HepG2 (cell line): ENCODE measurements at regions of chr2 and their contacts with region 1.

Region 1: DNA sequence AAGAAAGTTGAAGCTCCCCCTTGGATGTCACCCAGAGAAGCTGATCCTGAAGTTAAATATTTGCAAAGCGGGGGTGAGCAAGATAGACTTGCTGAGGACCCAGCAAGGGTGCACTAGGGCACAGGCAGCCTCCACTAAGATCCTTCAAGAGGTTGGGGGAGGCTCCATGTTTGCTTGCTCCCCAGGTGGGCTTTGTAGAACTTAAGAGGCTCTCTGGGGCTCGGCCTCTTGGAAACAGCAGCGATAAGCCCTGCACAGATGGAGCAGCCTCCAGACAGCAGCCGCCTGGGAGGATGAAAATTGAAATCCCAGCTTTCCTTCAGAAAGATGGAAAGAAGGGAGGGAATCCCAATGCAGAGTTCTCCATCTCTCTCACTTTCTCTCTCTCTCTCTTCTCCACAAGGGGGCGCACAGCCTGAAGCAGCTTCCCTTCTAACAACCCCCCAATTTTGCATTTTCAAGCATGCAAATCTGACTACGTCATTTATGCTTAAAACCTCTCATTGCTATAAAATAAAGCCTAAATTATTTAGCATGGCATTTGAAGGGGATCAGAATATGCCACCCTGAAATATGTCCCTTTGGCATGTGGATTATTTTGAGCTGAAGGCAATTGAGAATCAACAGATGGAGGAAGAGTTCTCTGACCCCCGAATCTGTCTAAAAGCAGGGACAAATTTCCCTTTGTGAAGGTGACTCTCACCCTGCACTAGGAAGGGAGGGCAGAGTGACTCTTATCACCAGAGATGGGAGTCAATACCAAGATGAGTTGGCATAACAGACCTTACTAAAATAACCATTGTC is 185.7 kb upstream of the KLHL29 start:
- DNase-seq: peak; percentile 26
- ATAC-seq: peak; percentile 64
- H3K4me3 ChIP-seq: no peak overlapping the region
- H3K27ac ChIP-seq: no peak overlapping the region
- H3K4me1 ChIP-seq: 0 out of 2 replicates have a peak, but pooled peaks cover 4% of the 10 kb centered on the region
- H3K27me3 ChIP-seq: no peaks in the 10 kb centered on the region
- CTCF ChIP-seq: peak; percentile 62
- EP300 ChIP-seq: no peak
- POLR2A ChIP-seq: no peak
- RAD21 ChIP-seq: peak; percentile 39; the same call in 1 of the 2 replicates

Region 2: DNA sequence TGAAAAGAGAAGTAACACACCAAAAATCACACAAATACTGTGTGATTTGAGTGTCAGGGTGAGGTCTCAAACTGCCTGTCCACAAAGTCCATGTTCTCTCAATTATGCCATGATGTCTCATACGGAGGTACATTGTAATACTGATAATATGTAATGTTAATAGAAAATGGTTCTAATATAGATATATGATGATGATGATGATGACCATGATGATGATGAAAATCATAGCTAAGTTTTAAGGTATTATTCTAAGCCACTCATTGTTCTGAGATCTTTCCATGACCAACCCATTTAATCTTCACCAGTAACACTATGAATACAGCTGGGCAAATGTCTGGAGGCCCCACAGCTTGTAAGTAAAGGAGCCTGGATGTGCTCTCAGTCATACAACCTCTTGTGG is 10.7 kb before region 1 on chr2:
- CTCF ChIA-PET with region 1: no interaction called
- POLR2A ChIA-PET with region 1: no interaction called
- in situ Hi-C with region 1: no loop called
- intact Hi-C with region 1: no loop called
- DNase-seq: no peak
- ATAC-seq: no peak
- H3K4me3 ChIP-seq: no peak overlapping the region
- H3K27ac ChIP-seq: no peak overlapping the region
- H3K4me1 ChIP-seq: no peaks in the 10 kb centered on the region
- H3K27me3 ChIP-seq: no peaks in the 10 kb centered on the region
- CTCF ChIP-seq: no peak
- EP300 ChIP-seq: no peak
- POLR2A ChIP-seq: no peak
- RAD21 ChIP-seq: no peak

Region 3: DNA sequence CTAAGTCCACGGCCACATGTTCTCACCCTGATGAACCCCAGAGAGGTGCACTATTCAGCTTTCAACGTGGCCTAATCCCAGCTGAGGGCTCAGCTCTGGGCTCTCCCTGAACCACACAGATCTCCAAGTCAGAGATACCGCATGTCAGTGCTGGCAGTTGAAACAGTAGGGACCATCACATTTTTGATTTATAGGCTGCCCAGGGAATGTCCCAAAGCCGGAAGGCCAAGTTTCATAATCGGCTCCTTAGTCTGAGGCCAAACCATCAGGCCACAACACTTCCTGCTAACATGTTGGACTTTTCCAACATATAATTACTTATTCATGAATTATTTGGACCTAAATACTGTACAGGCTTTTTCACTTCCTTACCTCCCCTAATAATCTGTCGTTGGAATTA is 93.7 kb after region 1 on chr2:
- CTCF ChIA-PET with region 1: no interaction called
- POLR2A ChIA-PET with region 1: no interaction called
- in situ Hi-C with region 1: no loop called
- intact Hi-C with region 1: loop called (anchors 5 kb)
- DNase-seq: no peak
- ATAC-seq: no peak
- H3K4me3 ChIP-seq: no peak overlapping the region
- H3K27ac ChIP-seq: no peak overlapping the region
- H3K4me1 ChIP-seq: no peaks in the 10 kb centered on the region
- H3K27me3 ChIP-seq: no peaks in the 10 kb centered on the region; a peak in 1 of 5 replicates
- CTCF ChIP-seq: no peak
- EP300 ChIP-seq: no peak
- POLR2A ChIP-seq: no peak
- RAD21 ChIP-seq: no peak

Region 4: DNA sequence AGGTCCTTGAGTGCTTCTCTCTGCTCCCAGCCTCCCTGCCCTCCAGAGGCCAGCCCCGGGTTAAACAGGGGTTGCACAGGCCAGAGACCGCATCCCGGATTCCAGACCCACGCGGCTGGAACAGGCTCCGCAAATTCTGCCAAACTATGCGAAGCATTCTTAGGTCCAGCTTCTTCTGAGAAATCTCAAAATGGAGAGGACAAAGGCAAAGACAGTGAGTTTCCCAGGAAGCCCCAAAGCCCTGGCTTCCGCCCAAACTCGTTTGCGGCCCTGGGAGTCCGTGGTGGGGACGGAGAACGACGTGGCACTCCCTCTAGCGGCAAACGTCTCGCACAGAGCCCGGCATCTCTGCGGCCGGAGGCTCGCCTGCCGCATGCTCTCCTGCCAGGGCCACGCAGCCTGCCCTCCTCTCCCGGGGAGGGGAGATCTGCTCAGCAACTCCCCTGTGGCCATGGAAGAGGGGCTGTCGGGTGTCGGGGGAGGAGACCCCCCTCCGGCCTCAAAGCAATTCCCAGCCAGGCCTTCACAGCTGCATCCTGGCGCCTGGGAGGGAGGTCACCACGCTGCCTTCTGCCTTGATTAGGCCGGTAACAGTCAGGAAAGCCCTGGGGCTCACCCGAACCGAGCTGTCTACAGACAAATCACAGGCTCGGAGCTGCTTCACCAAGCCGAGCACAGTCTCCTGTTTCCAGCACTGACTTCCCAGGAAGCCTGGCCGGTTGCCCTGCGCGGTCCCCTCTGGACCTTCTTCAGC is 152.2 kb after region 1 on chr2:
- CTCF ChIA-PET with region 1: no interaction called
- POLR2A ChIA-PET with region 1: no interaction called
- in situ Hi-C with region 1: no loop called
- intact Hi-C with region 1: loop called (anchors 5 kb)
- DNase-seq: peak; percentile 37
- ATAC-seq: peak; percentile 99
- H3K4me3 ChIP-seq: no peak overlapping the region
- H3K27ac ChIP-seq: no peak overlapping the region
- H3K4me1 ChIP-seq: no peaks in the 10 kb centered on the region
- H3K27me3 ChIP-seq: peaks cover 0 to 8% of the 10 kb centered on the region in 2 experiments; a peak in 2 of 5 replicates
- CTCF ChIP-seq: peak; percentile 95
- EP300 ChIP-seq: no peak
- POLR2A ChIP-seq: no peak
- RAD21 ChIP-seq: peak; percentile 86

Region 5: GRCh38 chr2:23460228-23460627 is 260.9 kb after region 1 on chr2:
- CTCF ChIA-PET with region 1: interaction called, 11 read pairs
- POLR2A ChIA-PET with region 1: no interaction called
- in situ Hi-C with region 1: no loop called
- intact Hi-C with region 1: no loop called
- DNase-seq: no peak
- ATAC-seq: peak; percentile 57
- H3K4me3 ChIP-seq: no peak overlapping the region
- H3K27ac ChIP-seq: no peak overlapping the region
- H3K4me1 ChIP-seq: no peaks in the 10 kb centered on the region
- H3K27me3 ChIP-seq: peaks cover 2 to 11% of the 10 kb centered on the region in 2 experiments; a peak in 3 of 5 replicates
- CTCF ChIP-seq: peak; percentile 50
- EP300 ChIP-seq: no peak
- POLR2A ChIP-seq: no peak
- RAD21 ChIP-seq: no peak